PC-3 (cell line): ENCODE measurements at regions of chr1 and their contacts with region 1.

Region 1: DNA sequence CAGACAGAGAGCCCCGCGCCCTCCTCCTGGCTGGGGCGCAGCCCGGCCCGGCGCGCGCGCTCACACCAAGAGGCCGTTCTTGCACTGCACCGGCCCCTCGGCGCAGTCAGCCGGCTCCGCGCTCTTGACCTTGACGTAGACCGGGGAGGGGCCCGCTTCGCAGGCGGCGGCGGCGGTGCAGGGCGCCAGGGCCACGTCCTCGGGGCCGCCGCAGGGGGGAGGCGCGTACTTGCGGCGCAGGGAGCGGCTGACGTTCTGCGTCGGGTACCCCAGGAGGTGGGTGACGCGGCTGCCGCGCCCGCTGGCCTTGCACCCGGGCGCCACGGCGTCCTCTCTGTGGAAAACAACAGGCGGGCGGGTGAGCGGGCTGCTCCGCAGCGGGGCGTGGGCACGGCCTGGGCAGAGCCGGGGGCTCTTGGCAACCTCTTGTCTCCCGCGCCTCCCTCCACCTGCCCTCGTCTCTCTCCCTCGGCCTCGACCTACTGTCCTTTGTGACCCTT is 7.7 kb downstream of the VSIG8 start:
- DNase-seq: peak; percentile 85
- ATAC-seq: peak; percentile 83
- H3K4me3 ChIP-seq: peak overlapping the region; percentile 84
- H3K27ac ChIP-seq: peak overlapping the region; percentile 73
- H3K4me1 ChIP-seq: peaks cover 25% of the 10 kb centered on the region
- H3K27me3 ChIP-seq: no peaks in the 10 kb centered on the region
- CTCF ChIP-seq: no peak

Region 2: GRCh38 chr1:159798893-159799292 is 55.9 kb before region 1 on chr1:
- CTCF ChIA-PET with region 1: no interaction called
- POLR2A ChIA-PET with region 1: no interaction called
- intact Hi-C with region 1: loop called (anchors 2 kb)
- DNase-seq: peak; percentile 92
- ATAC-seq: peak; percentile 94
- H3K4me3 ChIP-seq: no peak overlapping the region
- H3K27ac ChIP-seq: no peak overlapping the region
- H3K4me1 ChIP-seq: peaks cover 3% of the 10 kb centered on the region; the same call in 1 of the 2 replicates
- H3K27me3 ChIP-seq: peaks cover 33% of the 10 kb centered on the region
- CTCF ChIP-seq: peak; percentile 98

Region 3: GRCh38 chr1:159879977-159880376 is 25.2 kb after region 1 on chr1:
- CTCF ChIA-PET with region 1: no interaction called
- POLR2A ChIA-PET with region 1: interaction called, 3 read pairs
- intact Hi-C with region 1: loop called (anchors 1 kb)
- DNase-seq: peak; percentile 91
- ATAC-seq: peak; percentile 42
- H3K4me3 ChIP-seq: no peak overlapping the region
- H3K27ac ChIP-seq: peak overlapping the region; percentile 97
- H3K4me1 ChIP-seq: peaks cover 54% of the 10 kb centered on the region
- H3K27me3 ChIP-seq: no peaks in the 10 kb centered on the region
- CTCF ChIP-seq: no peak

Region 4: DNA sequence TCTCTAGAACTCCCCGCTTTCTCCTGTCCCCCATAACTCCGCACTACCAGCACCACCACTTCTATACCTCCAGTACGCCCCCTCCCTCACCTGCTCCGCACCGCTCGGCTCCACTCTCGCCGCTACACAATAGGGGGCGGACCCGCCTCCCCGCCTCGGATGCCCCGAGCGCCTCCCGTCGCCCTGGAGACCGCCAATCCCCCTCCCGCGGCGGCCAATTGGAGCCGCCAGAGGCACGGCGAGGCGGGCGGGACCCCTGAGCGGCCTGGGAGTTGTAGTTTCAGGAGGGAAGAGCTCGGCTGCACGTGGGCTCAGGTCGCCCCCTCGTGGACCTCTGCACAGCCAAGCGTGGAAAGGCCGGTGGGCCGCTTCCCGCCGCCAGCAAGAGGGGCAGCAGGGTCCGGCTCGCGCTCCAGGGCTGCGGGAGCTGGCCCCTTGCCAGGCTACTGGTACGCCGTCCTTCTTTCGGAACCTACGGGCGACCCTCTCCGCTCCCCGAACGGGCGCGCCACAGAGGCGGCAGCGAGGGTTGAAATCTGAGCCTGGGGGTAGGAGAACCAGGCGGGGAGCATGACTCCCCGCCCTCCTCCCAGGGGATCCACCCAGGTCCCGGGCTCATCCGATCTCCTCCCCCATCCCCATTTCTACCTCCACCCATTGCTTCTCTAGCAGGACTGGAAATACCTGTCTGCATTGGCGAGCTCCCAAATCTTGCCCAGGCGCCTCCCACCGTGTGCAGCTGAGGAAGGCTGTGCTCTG is 90.9 kb after region 1 on chr1 and contains the start of gene IGSF9:
- CTCF ChIA-PET with region 1: no interaction called
- POLR2A ChIA-PET with region 1: no interaction called
- intact Hi-C with region 1: no loop called
- DNase-seq: peak; percentile 99
- ATAC-seq: peak; percentile 92
- H3K4me3 ChIP-seq: peak within 1 kb of the TSS; percentile 84
- H3K27ac ChIP-seq: peak within 1 kb of the TSS; percentile 83
- H3K4me1 ChIP-seq: peaks cover 42% of the 10 kb centered on the region
- H3K27me3 ChIP-seq: no peaks in the 10 kb centered on the region
- CTCF ChIP-seq: peak; percentile 82
- total RNA-seq, gene IGSF9: 15.6 and 19.9 TPM in 2 replicates